Psoas muscle (tissue), 8 donors: ENCODE measurements at regions of chr6 and their contacts with region 1.

Region 1: DNA sequence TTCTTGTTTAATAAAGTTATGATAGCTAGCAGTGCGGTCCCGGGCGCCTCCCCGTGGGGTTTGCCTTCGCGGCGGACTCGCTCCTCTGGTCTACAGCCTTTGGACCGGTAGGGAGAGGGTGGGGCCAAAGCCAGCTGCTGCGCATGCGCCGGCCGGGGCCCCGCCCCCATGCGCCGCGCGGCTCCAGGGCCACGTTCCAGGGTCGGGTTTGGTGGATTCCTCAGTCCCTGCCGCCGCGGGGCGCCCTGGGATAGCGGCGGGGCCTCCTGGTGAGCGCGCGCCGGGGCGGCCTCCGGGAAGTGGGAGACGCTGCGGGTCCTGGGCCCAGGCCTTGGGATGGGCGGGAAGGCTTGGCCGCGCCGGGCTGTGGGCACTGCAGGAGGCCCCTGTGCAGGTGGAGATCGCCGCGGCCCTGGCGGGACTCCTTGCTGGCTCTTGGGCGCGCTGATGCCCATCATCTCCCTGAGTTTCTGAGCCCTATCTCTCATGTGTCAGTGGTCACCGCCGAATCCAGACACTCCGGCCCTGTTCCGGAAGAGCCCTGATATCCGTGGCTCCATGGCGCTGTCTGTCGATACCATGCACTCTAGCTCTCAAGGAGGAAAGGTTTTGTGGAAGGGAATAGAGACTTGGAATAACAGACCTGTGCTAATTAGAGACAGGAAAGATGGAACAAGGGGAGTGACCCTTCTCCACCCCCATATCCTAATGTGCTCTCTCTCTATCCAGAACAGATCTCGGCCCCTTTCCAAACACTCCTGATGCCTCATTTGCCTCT is at the start of gene VARS2:
- DNase-seq: peak; percentile 91 to 95
- ATAC-seq: peak; percentile 93 to 97 (median 96)
- H3K4me3 ChIP-seq: peak within 1 kb of the TSS; percentile 75
- H3K27ac ChIP-seq: peak within 1 kb of the TSS; percentile 92
- H3K4me1 ChIP-seq: peaks cover 23% of the 10 kb centered on the region
- H3K27me3 ChIP-seq: no peaks in the 10 kb centered on the region
- CTCF ChIP-seq: peak; percentile 42
- total RNA-seq, gene VARS2: 25.8 to 36.6 (median 28.2) TPM

Region 2: DNA sequence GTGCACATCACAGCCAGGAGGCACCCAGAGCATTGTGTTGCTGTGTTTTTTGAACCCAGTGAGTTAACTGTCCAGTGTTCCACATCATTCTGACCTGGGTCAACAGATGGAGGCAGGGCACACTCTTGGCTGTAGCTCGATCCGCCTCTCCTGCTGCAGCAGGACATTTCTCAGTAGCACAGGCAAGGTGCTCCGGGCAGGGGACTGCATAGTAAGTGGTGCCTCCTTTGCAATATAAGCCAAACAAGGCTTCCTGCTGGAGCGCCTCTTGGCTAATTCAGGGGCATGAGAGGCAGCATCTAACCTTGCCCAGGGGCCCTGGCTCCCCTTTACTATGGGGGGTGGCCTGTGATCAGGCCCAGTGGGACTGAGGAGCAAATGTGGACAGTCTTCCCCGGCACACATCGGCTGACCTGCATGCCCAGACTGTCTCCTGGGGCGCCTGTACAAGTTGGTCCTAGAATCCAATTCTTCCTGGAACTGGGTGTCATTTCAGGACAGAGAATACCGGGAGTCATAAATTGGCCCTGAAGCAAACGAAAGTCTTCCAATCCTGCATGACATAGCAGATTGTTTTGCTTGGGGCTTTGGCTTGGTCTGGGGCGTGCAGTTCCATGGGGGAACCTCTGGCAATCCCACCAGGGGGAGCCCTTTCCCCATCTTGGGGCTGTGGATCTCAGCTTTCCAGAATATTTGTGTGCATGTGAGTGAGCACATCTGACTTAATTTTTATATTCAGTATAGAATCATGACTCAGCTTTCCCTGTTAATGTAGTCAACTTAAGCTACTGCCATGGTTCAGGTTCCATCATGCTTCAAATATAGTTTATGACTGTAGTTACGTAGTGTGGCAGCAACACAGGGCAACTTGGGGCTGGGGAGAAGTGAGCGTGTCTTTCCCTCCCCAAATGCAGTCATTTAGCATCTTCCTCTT is 86.0 kb before region 1 on chr6:
- intact Hi-C with region 1: loop called in 1 of 2 experiments (anchors 1 kb)
- DNase-seq: peak; percentile 87 to 96
- ATAC-seq: peak; percentile 84 to 89 (median 89)
- H3K4me3 ChIP-seq: peak overlapping the region; percentile 37
- H3K27ac ChIP-seq: peak overlapping the region; percentile 95
- H3K4me1 ChIP-seq: peaks cover 34% of the 10 kb centered on the region
- H3K27me3 ChIP-seq: no peaks in the 10 kb centered on the region
- CTCF ChIP-seq: peak; percentile 96

Region 3: GRCh38 chr6:31042806-31043205 is 128.5 kb after region 1 on chr6:
- intact Hi-C with region 1: loop called (anchors 5 to 10 kb)
- DNase-seq: peak in 1 of 2 donors; percentile 23
- ATAC-seq: peak in 2 of 4 donors; percentile 62 to 68
- H3K4me3 ChIP-seq: no peak overlapping the region
- H3K27ac ChIP-seq: no peak overlapping the region
- H3K4me1 ChIP-seq: no peaks in the 10 kb centered on the region
- H3K27me3 ChIP-seq: no peaks in the 10 kb centered on the region
- CTCF ChIP-seq: peak; percentile 54

Region 4: GRCh38 chr6:31068669-31069340 is 154.5 kb after region 1 on chr6:
- intact Hi-C with region 1: loop called in 1 of 2 experiments (anchors 2 kb)
- DNase-seq: peak; percentile 75 to 81
- ATAC-seq: peak; percentile 85 to 95 (median 94)
- H3K4me3 ChIP-seq: no peak overlapping the region
- H3K27ac ChIP-seq: no peak overlapping the region
- H3K4me1 ChIP-seq: no peaks in the 10 kb centered on the region
- H3K27me3 ChIP-seq: no peaks in the 10 kb centered on the region
- CTCF ChIP-seq: peak; percentile 86

Region 5: DNA sequence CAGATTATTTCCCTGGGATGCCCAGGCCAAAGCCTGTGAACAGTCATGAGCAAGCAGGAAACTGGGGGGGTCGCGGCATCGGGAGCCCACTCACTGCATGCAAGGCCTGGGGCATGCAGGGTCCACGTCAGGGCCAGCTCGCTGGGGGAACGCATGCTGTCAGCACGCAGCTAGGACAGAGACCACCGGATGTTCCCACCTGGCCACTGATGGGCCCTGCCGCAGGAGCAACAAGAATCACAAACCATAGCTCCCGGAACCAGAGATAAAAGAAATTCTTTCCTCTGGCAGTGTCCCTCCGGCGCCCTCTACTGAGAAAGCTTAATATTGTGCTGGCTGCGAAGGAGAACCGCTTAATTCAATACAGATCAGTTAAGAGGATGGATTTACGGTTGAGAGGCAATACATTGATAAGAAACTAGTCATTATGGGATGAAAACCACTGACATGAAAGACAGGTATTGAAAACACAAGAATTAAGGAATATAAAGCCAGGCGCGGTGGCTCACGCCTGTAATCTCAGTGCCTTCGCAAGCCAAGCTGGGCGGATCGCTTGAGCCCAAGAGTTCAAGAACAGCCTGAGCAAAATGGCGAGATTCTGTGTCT is 165.5 kb after region 1 on chr6:
- intact Hi-C with region 1: loop called in 1 of 2 experiments (anchors 2 kb)
- DNase-seq: peak; percentile 46 to 70
- ATAC-seq: peak; percentile 61 to 84 (median 64)
- H3K4me3 ChIP-seq: peak overlapping the region; percentile 21
- H3K27ac ChIP-seq: no peak overlapping the region
- H3K4me1 ChIP-seq: peaks cover 10% of the 10 kb centered on the region
- H3K27me3 ChIP-seq: no peaks in the 10 kb centered on the region
- CTCF ChIP-seq: peak; percentile 78

Region 6: DNA sequence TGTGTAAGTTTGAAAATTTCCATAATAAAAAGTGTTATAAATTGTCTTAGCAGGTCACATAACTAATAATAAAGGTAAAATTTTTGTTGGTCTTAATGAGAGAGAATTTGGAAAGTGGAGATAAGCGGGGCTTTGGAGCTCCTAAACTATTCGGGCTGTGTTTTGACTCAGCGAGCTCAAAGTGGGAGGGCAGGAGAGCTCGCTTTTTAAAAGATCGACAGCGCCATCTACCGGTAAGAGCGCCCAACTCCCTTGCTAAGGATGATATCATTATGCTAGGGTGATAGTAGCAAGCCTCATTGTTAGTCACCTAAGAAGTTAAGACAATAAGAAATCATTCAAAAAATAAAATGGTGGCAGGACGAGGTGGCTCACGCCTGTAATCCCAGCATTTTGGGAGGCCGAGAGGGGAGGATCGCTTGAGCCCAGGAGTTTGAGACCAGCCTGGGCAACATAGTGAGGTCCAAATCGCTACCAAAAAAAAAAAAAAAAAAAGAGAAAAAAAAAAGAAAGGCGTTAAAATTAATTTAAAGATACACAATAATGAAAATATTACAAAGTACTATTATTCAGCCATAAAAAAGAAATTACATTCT is 173.3 kb after region 1 on chr6:
- intact Hi-C with region 1: loop called in 1 of 2 experiments (anchors 2 kb)
- DNase-seq: peak; percentile 81 to 85
- ATAC-seq: peak; percentile 89 to 97 (median 94)
- H3K4me3 ChIP-seq: no peak overlapping the region
- H3K27ac ChIP-seq: peak overlapping the region; percentile 31
- H3K4me1 ChIP-seq: peaks cover 17% of the 10 kb centered on the region
- H3K27me3 ChIP-seq: no peaks in the 10 kb centered on the region
- CTCF ChIP-seq: peak; percentile 86